Activated naive CD4-positive, alpha-beta T cell treated with anti-CD3 and anti-CD28 coated beads for 36 hours (primary cell): ENCODE measurements at regions of chr10 and their contacts with region 1.

Region 1: DNA sequence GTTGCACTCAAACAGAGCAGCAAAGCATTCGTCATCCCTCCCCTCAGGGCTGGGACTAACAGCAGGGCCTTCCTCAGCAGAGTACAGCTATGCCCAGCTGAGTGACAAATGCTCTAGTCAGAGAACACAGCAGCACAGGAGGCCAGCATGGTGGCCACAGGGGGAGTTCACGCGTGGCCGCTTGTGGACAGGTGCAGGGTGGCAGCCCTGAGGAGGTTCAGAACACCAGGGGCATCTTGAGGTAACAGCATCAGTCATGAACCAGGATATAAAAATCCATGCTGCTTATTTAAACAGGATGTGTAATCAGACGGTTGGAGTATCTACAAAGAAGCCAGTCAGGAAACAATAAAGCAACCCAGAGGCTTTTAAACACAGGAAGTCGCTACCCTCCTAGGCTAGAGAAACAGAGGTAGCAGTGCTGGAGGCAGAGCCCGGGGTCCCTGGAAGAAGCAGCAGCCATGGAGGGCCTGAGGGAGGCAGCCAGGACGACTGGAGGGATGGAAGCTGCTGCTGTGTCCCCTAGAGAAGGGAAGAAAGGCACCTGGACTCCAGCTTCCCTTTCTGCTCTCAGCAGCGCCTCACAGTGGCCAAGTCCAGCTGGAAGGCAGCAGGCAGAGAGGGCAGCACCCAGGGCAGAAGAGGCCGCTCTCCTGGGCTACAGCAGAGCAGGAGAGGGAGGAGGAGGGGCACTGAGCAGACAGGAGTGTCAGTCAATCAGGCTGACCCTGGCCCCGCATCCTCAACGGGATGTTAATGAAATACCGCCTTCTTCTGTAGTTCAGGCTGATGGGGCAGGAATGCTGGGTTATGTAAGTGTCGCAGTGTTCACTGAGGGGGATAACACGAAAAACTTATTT is 70.8 kb upstream of the UCN3 start:
- DNase-seq: peak; percentile 92
- H3K4me3 Mint-ChIP-seq: peak overlapping the region; percentile 85
- H3K27ac Mint-ChIP-seq: peak overlapping the region; percentile 96
- H3K4me1 Mint-ChIP-seq: peaks cover 73% of the 10 kb centered on the region
- H3K27me3 Mint-ChIP-seq: no peaks in the 10 kb centered on the region

Region 2: DNA sequence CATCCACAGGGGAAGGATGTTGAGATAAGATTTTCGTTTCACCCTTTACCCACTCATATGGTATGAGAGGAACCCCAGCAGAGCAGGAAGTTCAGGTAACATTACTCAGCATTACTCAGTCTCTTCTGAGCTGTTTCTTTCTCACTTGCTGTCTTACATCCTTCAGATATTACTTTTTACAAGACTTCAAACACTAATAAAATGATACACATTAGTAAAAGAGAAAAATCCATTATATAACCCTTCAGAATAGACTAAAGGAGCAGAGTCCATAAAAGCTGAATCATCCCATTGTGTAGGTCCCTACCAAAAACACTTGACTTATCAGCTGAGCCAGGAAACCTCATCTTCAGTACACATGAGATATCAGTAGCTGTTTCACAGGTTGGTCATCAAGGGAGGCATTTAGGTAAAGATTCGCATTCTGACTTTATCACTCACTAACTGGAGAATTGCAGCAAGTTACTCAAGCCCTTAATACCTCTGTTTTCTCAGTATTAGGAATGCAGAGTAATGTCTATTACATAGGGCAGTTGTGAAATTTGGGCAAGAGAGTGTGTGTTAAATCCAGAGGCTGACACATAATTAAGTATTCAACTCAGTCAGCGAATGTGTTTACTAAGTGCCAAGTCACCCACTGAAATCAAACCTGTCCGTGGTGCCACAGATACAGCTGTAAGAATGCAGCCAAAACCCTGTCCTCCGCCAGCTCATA is 1553.6 kb before region 1 on chr10:
- CTCF ChIA-PET with region 1: no interaction called
- intact Hi-C with region 1: loop called (anchors 5 kb)
- DNase-seq: no peak
- H3K4me3 Mint-ChIP-seq: no peak overlapping the region
- H3K27ac Mint-ChIP-seq: peak overlapping the region; percentile 59
- H3K4me1 Mint-ChIP-seq: peaks cover 31% of the 10 kb centered on the region
- H3K27me3 Mint-ChIP-seq: no peaks in the 10 kb centered on the region

Region 3: DNA sequence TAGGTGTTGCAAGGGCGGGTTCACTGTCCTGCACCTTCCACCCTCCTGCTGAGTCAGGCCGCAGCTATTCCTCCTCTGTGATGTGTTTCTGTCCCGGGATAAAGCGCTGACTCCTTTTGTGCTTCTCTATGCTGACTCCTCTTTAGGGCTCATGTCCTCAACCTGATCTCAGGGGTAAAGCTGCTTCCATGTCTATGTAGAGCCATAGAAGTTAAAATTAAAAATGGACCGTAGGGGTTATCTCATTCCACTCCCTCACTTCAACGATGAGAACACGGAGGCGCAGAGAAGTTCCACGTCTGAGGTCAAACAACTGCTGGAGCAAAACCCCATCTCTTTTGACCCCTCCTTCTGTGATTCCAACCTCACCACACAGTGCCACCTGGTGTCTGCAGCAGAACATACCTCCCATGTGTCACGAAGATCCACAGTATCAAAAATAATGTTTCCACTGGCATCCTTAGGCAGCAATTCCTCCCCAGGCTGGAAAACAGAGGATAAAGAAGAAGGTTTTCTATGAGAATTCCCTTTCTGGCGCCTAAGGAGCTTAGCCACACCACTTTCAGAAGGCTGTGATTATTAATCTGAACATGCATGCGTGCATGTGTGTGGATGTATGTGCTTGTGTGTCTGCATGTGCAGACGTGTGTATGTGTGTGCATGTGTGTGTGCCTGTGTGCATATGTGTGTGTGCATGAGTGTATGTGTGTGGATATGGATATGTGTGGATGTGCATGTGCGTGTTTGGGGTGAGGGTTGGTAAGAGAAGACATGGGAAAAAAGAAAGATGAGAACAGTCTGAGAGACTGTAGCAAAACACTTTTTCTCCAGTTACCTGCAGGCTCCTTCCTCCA is 10.4 kb before region 1 on chr10:
- CTCF ChIA-PET with region 1: interaction called, 6 read pairs
- intact Hi-C with region 1: loop called (anchors 1 kb)
- DNase-seq: peak; percentile 83
- H3K4me3 Mint-ChIP-seq: no peak overlapping the region
- H3K27ac Mint-ChIP-seq: peak overlapping the region; percentile 72
- H3K4me1 Mint-ChIP-seq: peaks cover 38% of the 10 kb centered on the region
- H3K27me3 Mint-ChIP-seq: no peaks in the 10 kb centered on the region

Region 4: DNA sequence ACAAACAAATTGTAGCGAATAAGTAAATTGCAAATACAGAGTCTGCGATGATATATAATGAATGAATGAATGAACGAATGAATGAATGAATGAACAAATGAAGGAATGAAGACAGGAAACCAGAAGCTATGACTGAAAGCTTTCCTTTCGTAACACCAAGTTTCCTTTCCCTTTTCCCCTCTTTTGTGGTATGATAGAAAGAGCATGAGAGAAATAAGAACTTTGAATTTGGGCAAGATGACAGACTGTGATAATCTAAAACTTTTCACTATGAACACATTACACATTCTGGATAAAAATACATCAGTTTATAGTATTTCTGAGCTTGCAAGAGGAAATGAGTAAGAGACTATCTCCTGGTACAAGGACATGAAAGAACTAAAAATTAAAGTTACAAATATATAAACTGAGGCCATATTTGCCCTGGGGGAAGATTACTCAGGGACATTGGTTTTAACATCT is 62.4 kb after region 1 on chr10:
- CTCF ChIA-PET with region 1: interaction called, 3 read pairs
- intact Hi-C with region 1: loop called (anchors 1 kb)
- DNase-seq: no peak
- H3K4me3 Mint-ChIP-seq: no peak overlapping the region
- H3K27ac Mint-ChIP-seq: peak overlapping the region; percentile 43
- H3K4me1 Mint-ChIP-seq: peaks cover 24% of the 10 kb centered on the region
- H3K27me3 Mint-ChIP-seq: no peaks in the 10 kb centered on the region

Region 5: GRCh38 chr10:5446390-5446926 is 152.5 kb after region 1 on chr10:
- CTCF ChIA-PET with region 1: no interaction called
- intact Hi-C with region 1: no loop called
- DNase-seq: peak; percentile 77
- H3K4me3 Mint-ChIP-seq: peak overlapping the region; percentile 61
- H3K27ac Mint-ChIP-seq: peak overlapping the region; percentile 33
- H3K4me1 Mint-ChIP-seq: peaks cover 48% of the 10 kb centered on the region
- H3K27me3 Mint-ChIP-seq: no peaks in the 10 kb centered on the region

Region 6: GRCh38 chr10:5684318-5684970 is 390.5 kb after region 1 on chr10 and contains the start of gene TASOR2:
- CTCF ChIA-PET with region 1: no interaction called
- intact Hi-C with region 1: loop called (anchors 2 kb)
- DNase-seq: peak; percentile 98
- H3K4me3 Mint-ChIP-seq: peak within 1 kb of the TSS; percentile 87
- H3K27ac Mint-ChIP-seq: peak within 1 kb of the TSS; percentile 94
- H3K4me1 Mint-ChIP-seq: peaks cover 45% of the 10 kb centered on the region
- H3K27me3 Mint-ChIP-seq: no peaks in the 10 kb centered on the region
- total RNA-seq, gene TASOR2: 36.4 to 37.7 TPM

Region 7: GRCh38 chr10:5890452-5890915 is 596.6 kb after region 1 on chr10:
- CTCF ChIA-PET with region 1: no interaction called
- intact Hi-C with region 1: no loop called
- DNase-seq: peak; percentile 48
- H3K4me3 Mint-ChIP-seq: peak overlapping the region; percentile 92
- H3K27ac Mint-ChIP-seq: peak overlapping the region; percentile 74
- H3K4me1 Mint-ChIP-seq: peaks cover 60% of the 10 kb centered on the region
- H3K27me3 Mint-ChIP-seq: no peaks in the 10 kb centered on the region

Region 8: DNA sequence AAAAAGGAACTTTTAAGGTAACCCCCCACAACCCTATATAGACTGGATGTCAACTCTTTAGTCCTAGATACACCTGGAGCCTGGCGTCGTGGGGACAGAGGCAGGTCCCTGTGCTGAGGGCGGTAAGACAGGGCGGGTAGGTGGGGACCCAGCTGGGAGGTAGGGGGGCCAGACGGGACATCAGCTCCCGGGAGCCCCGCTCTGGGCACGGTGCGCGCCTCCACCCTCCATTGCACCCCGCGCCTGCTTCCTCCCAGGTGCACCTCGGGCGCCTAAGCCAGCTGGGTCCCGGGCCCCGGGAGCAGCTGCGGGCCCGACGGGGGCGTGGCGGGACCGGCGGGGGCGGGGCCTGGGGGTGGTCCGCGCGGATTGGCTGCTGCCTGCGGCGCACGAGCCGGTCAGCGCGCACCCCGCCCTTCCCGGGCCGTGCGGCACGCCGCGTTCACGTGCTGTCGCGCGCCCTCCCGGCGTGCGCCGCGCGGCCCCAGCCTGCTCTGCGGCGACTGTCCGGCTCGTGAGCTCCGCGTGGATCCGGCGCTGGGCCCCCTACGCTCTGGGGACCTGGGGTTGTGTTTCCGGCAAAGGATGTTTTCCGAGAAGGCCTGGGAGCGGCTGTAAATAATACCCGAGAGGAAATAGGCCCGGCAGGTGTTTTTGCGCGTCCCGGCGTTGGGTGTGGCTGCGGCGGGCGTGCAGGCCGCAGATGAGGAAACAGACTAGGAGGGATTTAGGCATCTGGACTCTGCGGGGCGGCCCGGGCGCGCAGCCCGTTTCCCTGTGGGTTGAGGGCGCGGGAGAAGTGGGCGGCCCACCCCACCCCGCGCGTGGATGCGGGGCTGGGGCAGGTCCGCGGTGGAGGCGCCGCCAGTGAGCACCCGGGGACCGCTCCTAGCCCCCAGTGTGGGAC is 869.7 kb after region 1 on chr10:
- CTCF ChIA-PET with region 1: no interaction called
- intact Hi-C with region 1: no loop called
- DNase-seq: peak; percentile 92
- H3K4me3 Mint-ChIP-seq: peak overlapping the region; percentile 98
- H3K27ac Mint-ChIP-seq: peak overlapping the region; percentile 94
- H3K4me1 Mint-ChIP-seq: peaks cover 57% of the 10 kb centered on the region
- H3K27me3 Mint-ChIP-seq: no peaks in the 10 kb centered on the region